ENCODE measurements at regions of chr16 and their contacts with region 1.

Region 1: GRCh38 chr16:22321339-22322001 is 24.3 kb downstream of the POLR3E start:
- DNase-seq: no peak

Region 2: GRCh38 chr16:22217889-22218730 is 103.4 kb before region 1 on chr16:
- intact Hi-C with region 1: no loop called
- DNase-seq: no peak

Region 3: GRCh38 chr16:22417019-22417418 is 95.5 kb after region 1 on chr16:
- intact Hi-C with region 1: loop called (anchors 10 kb)
- DNase-seq: no peak